ENCODE measurements at regions of chr14 and their contacts with region 1.

Region 1: DNA sequence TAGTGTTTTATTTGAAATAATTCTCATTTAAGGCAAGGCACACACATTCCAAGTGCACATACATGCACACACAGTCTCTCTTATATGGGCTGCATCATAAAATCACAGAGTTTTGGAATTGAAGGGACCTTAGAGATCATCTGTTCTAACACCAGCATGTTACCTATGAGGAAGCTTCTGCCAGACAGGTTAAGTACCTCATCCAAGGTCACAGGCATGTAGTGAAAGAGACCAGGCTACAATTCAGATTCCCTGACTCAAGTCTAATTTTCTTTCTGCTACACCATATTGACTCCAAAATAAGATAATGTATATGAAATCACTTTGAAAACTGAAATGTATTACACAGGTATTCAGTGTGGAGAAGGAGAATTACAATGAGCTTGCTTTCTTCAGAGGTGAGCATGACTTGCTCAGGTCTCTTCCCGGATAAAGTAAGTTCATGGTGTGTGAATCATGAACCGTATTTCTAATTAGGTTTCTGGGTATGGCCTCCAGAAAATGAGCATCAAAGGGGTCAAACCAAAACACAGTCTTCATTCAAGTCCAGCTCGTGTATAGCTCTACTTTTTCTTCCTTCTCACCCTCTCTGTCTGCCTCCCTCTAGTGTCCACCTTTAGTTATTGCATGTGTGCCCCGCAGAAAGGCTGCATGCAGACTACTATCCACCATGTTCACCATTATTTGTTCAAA is 411.9 kb downstream of the FUT8 start:
- DNase-seq: peak; percentile 70
- H3K4me3 Mint-ChIP-seq: no peak overlapping the region
- H3K27ac Mint-ChIP-seq: no peak overlapping the region
- H3K4me1 Mint-ChIP-seq: no peaks in the 10 kb centered on the region
- H3K27me3 Mint-ChIP-seq: peaks cover 34% of the 10 kb centered on the region
- CTCF ChIP-seq: peak; percentile 90

Region 2: DNA sequence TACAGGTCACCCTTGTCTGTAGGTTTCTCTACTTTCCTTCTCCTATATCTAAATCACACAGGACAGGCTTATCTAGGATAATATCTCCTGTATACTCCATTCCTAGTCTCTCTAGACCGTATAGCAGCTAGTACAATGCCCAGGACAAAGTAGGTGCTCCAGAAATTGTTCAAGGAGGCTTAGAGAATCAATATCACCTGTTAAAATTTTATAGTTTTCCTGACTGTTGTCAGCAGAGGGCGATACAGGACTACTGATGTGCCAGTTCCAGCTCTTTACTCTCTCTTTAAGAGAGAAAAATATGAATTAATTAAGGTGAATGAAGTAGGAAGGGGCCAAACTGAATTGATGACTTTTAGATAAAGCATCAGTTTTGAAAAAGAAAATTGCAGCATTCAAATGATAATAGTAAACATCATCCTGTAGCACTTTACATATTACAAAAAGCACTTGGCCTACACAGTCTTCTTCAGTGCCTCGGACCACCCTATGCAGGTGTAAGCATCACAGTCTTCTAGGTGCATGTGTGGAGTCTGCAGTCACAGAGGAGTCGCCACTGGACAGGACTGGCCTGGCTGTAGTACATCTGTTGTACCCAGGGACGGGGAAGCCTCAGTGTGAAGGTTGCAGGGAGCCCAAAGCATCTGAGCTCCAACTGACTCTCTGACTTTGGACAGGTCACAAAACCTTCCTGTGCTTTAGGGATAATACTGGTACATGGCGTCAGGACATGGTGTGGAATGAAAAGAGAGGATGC is 660.2 kb before region 1 on chr14:
- CTCF ChIA-PET with region 1: interaction called, 49 read pairs
- POLR2A ChIA-PET with region 1: interaction called, 4 read pairs
- intact Hi-C with region 1: loop called (anchors 1 kb)
- DNase-seq: peak; percentile 70
- H3K4me3 Mint-ChIP-seq: no peak overlapping the region
- H3K27ac Mint-ChIP-seq: no peak overlapping the region
- H3K4me1 Mint-ChIP-seq: peaks cover 19% of the 10 kb centered on the region
- H3K27me3 Mint-ChIP-seq: no peaks in the 10 kb centered on the region
- CTCF ChIP-seq: peak; percentile 74

Region 3: GRCh38 chr14:65222440-65222858 is 602.0 kb before region 1 on chr14:
- CTCF ChIA-PET with region 1: interaction called, 5 read pairs
- POLR2A ChIA-PET with region 1: no interaction called
- intact Hi-C with region 1: loop called (anchors 5 kb)
- DNase-seq: peak; percentile 71
- H3K4me3 Mint-ChIP-seq: no peak overlapping the region
- H3K27ac Mint-ChIP-seq: peak overlapping the region; percentile 77
- H3K4me1 Mint-ChIP-seq: peaks cover 27% of the 10 kb centered on the region
- H3K27me3 Mint-ChIP-seq: no peaks in the 10 kb centered on the region
- CTCF ChIP-seq: peak; percentile 88

Region 4: DNA sequence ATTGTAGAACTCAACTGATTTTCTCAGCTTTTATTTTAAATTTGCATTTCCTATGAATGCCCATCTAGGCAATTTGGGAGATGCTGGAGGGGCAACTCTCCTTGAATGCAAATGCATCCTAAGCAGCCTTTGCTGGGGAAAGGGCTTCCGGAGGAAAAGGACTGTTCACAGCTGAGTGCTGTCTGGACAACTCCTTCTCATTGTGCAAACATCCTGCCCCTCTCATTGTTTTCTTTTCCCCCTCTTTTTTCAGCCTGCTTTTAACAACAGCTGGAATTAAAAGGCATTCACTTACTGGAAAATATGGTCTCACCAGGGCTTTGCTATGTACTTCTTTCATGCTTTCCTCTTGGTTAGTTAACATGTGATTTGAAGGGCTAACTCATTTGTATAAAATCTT is 14.1 kb before region 1 on chr14:
- CTCF ChIA-PET with region 1: interaction called, 21 read pairs
- POLR2A ChIA-PET with region 1: interaction called, 4 read pairs
- intact Hi-C with region 1: no loop called
- DNase-seq: no peak
- H3K4me3 Mint-ChIP-seq: no peak overlapping the region
- H3K27ac Mint-ChIP-seq: no peak overlapping the region
- H3K4me1 Mint-ChIP-seq: no peaks in the 10 kb centered on the region
- H3K27me3 Mint-ChIP-seq: no peaks in the 10 kb centered on the region
- CTCF ChIP-seq: no peak

Region 5: GRCh38 chr14:65860956-65861611 is 36.7 kb after region 1 on chr14:
- CTCF ChIA-PET with region 1: no interaction called
- POLR2A ChIA-PET with region 1: no interaction called
- intact Hi-C with region 1: no loop called
- DNase-seq: no peak
- H3K4me3 Mint-ChIP-seq: no peak overlapping the region
- H3K27ac Mint-ChIP-seq: no peak overlapping the region
- H3K4me1 Mint-ChIP-seq: no peaks in the 10 kb centered on the region
- H3K27me3 Mint-ChIP-seq: peaks cover 24% of the 10 kb centered on the region
- CTCF ChIP-seq: no peak

Region 6: GRCh38 chr14:66070509-66071319 is 246.3 kb after region 1 on chr14:
- CTCF ChIA-PET with region 1: interaction called, 5 read pairs
- POLR2A ChIA-PET with region 1: no interaction called
- intact Hi-C with region 1: loop called (anchors 10 kb)
- DNase-seq: peak; percentile 62
- H3K4me3 Mint-ChIP-seq: no peak overlapping the region
- H3K27ac Mint-ChIP-seq: no peak overlapping the region
- H3K4me1 Mint-ChIP-seq: peaks cover 15% of the 10 kb centered on the region
- H3K27me3 Mint-ChIP-seq: peaks cover 25% of the 10 kb centered on the region
- CTCF ChIP-seq: peak; percentile 84

Measured in MCF 10A (cell line).